Stomach (tissue), 19 donors: ENCODE measurements at regions of chr11 and their contacts with region 1.

Region 1: DNA sequence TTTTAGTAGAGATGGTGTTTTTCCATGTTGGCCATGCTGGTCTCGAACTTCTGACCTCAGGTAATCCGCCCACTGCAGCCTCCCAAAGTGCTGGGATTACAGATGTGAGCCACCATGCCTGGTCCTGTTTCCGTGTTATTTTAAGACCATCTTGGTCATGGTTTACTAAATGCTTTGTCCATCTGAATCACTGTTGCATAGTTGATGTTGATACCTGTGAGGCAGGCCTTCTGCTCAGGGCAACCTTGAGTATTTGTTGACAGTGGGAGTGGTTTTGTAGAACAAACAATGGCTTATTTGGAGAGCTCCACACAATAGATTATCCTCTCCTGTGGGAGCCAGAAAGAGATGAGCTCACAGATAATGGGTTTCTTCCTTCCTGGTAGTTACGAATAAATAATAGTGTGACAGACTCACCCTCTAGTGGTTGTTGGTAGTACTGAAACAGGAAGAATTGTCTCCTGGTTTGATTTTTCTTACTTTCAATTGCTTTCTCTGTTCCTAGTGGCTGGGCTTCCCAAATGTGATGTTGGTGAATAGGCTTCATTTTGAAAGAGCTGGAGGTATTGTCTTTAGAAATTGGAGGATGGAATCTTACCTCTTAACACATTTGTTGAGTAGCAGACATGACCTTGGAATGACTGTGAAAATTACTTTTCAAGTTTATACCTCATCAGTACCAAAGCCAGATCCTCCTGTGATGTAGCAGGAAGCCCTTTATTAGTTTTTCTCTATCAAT is 39.0 kb downstream of the CTNND1 start:
- DNase-seq: peak in 1 of 2 donors; percentile 88
- H3K4me3 ChIP-seq: no peak overlapping the region
- H3K27ac ChIP-seq: peak overlapping the region; percentile 65 to 86 (median 80)
- H3K4me1 ChIP-seq: peaks cover 31 to 58% (median 49%) of the 10 kb centered on the region in 4 donors
- H3K27me3 ChIP-seq: no peaks in the 10 kb centered on the region
- CTCF ChIP-seq: peak in 5 of 7 experiments; percentile 85 to 96 (median 89)
- EP300 ChIP-seq: no peak
- POLR2A ChIP-seq: no peak

Region 2: GRCh38 chr11:57751676-57752253 is 48.8 kb before region 1 on chr11 and contains the start of gene BTBD18:
- intact Hi-C with region 1: loop called (anchors 5 kb)
- DNase-seq: peak; percentile 56 to 81
- H3K4me3 ChIP-seq: no peak within 1 kb of the TSS
- H3K27ac ChIP-seq: peak within 1 kb of the TSS in 2 of 5 donors; percentile 12 to 19
- H3K4me1 ChIP-seq: peaks cover 0 to 11% (median 6%) of the 10 kb centered on the region in 4 donors
- H3K27me3 ChIP-seq: no peaks in the 10 kb centered on the region
- CTCF ChIP-seq: peak in 4 of 7 experiments; percentile 12 to 52 (median 38)
- EP300 ChIP-seq: no peak
- POLR2A ChIP-seq: no peak
- total RNA-seq, gene BTBD18: not detected